ENCODE measurements at regions of chr6 and their contacts with region 1.

Region 1: DNA sequence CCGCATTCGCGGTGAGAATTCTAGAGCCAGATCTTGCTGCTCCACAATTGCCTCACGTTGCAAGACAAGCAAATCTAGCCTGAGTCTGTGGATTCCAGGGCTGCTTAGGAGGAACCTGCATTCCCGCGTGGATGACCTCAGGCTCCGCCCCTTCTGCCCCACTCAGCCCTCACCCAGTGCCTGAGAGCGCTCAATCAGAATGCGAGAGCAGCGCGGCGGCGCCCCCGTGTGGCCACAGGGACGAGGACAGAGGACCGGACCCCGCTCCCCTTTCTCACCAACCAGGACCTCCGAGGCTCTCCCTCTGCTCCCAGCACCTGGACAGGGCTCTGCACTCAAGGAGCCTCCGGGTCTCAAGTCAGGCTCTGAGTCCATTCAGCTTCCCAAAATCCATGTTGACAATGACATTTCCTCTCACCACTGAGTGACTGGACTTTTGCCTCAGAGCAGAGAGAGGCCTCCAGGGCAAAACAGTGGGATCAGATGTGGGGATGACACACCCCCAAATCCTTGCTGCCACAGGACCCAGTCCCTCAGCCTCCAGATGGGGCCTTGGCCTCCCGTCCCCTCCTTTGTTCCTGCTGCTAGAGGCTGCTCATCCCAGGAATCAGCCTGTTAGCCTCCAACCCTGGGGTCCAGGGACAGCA is 52.0 kb downstream of the RPP21 start:
- DNase-seq: peak; percentile 74
- H3K4me3 Mint-ChIP-seq: no peak overlapping the region
- H3K27ac Mint-ChIP-seq: no peak overlapping the region
- H3K4me1 Mint-ChIP-seq: no peaks in the 10 kb centered on the region
- H3K27me3 Mint-ChIP-seq: peaks cover 34% of the 10 kb centered on the region
- CTCF ChIP-seq: peak; percentile 61

Region 2: GRCh38 chr6:30357678-30358540 is 39.0 kb before region 1 on chr6:
- CTCF ChIA-PET with region 1: interaction called, 3 read pairs
- POLR2A ChIA-PET with region 1: no interaction called
- intact Hi-C with region 1: loop called (anchors 5 kb)
- DNase-seq: peak; percentile 58
- H3K4me3 Mint-ChIP-seq: peak overlapping the region; percentile 59
- H3K27ac Mint-ChIP-seq: no peak overlapping the region
- H3K4me1 Mint-ChIP-seq: no peaks in the 10 kb centered on the region
- H3K27me3 Mint-ChIP-seq: peaks cover 56% of the 10 kb centered on the region
- CTCF ChIP-seq: peak; percentile 65

Region 3: GRCh38 chr6:30907758-30908591 is 511.0 kb after region 1 on chr6 and contains the start of gene GTF2H4:
- CTCF ChIA-PET with region 1: no interaction called
- POLR2A ChIA-PET with region 1: no interaction called
- intact Hi-C with region 1: no loop called
- DNase-seq: peak; percentile 100
- H3K4me3 Mint-ChIP-seq: peak within 1 kb of the TSS; percentile 96
- H3K27ac Mint-ChIP-seq: peak within 1 kb of the TSS; percentile 57
- H3K4me1 Mint-ChIP-seq: peaks cover 16% of the 10 kb centered on the region
- H3K27me3 Mint-ChIP-seq: no peaks in the 10 kb centered on the region
- CTCF ChIP-seq: no peak
- total RNA-seq, gene GTF2H4: 30.6 and 33.9 TPM in 2 replicates

Region 4: DNA sequence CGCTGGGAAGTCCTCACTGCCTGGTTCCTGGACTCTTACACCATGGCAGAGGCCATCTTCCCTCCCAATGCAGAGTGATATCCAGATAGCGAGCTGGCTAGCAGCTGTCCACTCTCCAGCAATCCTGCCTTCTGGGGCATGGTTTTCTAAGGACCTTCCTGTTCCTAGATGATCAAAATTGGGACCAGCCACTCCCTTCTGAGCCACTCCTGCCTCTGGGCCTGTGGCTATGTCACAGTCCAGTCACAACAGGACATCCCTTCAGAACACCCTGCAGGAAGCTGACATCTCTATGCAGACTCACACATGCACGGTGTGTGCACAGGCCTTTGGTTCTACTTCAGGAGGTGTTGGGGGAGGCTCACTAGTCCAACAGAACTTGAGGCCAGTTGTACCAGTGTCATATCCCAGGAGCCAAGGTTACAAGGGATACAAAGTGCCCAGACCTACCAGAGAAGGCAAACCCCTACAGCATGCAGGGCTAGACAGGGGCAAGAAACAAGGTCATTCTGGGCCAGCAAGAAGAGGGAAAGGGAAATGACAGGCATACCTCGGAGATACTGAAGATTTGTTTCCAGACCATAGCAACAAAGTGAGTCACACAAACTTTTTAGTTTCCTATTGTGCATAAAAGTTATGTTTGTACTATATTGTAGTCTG is 1129.1 kb after region 1 on chr6:
- CTCF ChIA-PET with region 1: no interaction called
- POLR2A ChIA-PET with region 1: no interaction called
- intact Hi-C with region 1: no loop called
- DNase-seq: no peak
- H3K4me3 Mint-ChIP-seq: no peak overlapping the region
- H3K27ac Mint-ChIP-seq: no peak overlapping the region
- H3K4me1 Mint-ChIP-seq: no peaks in the 10 kb centered on the region
- H3K27me3 Mint-ChIP-seq: peaks cover 8% of the 10 kb centered on the region
- CTCF ChIP-seq: no peak

Measured in MCF 10A (cell line).